Transverse colon (tissue), 4 donors: ENCODE measurements at regions of chr1 and their contacts with region 1.

Region 1: GRCh38 chr1:164644774-164645235 is 85.8 kb downstream of the PBX1 start:
- DNase-seq: no peak
- H3K4me3 ChIP-seq: no peak overlapping the region
- H3K27ac ChIP-seq: peak overlapping the region; percentile 55 to 80 (median 70)
- H3K4me1 ChIP-seq: peaks cover 31 to 66% (median 37%) of the 10 kb centered on the region in 4 donors
- H3K27me3 ChIP-seq: no peaks in the 10 kb centered on the region
- CTCF ChIP-seq: no peak
- EP300 ChIP-seq: no peak
- POLR2A ChIP-seq: no peak

Region 2: GRCh38 chr1:164673584-164674214 is 28.9 kb after region 1 on chr1:
- in situ Hi-C with region 1: no loop called
- intact Hi-C with region 1: no loop called
- DNase-seq: no peak
- H3K4me3 ChIP-seq: no peak overlapping the region
- H3K27ac ChIP-seq: no peak overlapping the region
- H3K4me1 ChIP-seq: peaks cover 11 to 53% (median 16%) of the 10 kb centered on the region in 4 donors
- H3K27me3 ChIP-seq: no peaks in the 10 kb centered on the region
- CTCF ChIP-seq: peak in 4 of 5 experiments; percentile 19 to 38 (median 23)
- EP300 ChIP-seq: no peak
- POLR2A ChIP-seq: no peak

Region 3: DNA sequence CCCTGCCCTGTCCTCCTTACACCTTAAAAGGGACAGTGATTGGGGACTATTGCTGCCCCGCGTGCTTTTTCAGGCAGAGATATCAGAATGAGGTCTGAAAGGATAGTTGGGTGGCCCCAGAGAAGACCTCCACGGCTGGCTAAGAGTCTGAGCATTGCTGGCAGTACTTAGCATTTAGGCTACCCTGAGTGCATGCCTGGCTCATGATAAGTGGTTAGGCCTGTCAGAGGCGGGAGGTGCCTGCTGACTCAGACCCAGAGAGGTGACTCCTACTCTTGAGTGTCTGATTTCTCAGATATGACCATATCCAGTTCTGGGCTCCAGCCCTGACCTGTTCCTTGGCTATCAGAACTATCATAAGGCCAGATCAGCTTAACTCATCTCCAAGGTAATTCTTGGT is 127.8 kb after region 1 on chr1:
- in situ Hi-C with region 1: loop called in 1 of 4 experiments (anchors 25 kb)
- intact Hi-C with region 1: loop called (anchors 10 kb)
- DNase-seq: peak; percentile 65
- H3K4me3 ChIP-seq: no peak overlapping the region
- H3K27ac ChIP-seq: peak overlapping the region; percentile 69 to 80 (median 72)
- H3K4me1 ChIP-seq: peaks cover 43 to 91% (median 52%) of the 10 kb centered on the region in 4 donors
- H3K27me3 ChIP-seq: no peaks in the 10 kb centered on the region
- CTCF ChIP-seq: no peak
- EP300 ChIP-seq: no peak
- POLR2A ChIP-seq: no peak